ENCODE measurements at regions of chr1 and their contacts with region 1.

Region 1: GRCh38 chr1:153990468-153991150 is at the start of gene RPS27:
- DNase-seq: peak; percentile 99
- ATAC-seq: peak; percentile 36
- H3K4me3 ChIP-seq: peak within 1 kb of the TSS; percentile 94
- H3K27ac ChIP-seq: peak within 1 kb of the TSS; percentile 69
- H3K4me1 ChIP-seq: peaks cover 19% of the 10 kb centered on the region
- H3K27me3 ChIP-seq: no peaks in the 10 kb centered on the region
- CTCF ChIP-seq: no peak
- total RNA-seq, gene RPS27: 1,964 and 2,544 TPM in 2 replicates

Region 2: GRCh38 chr1:153677718-153678505 is 312.7 kb before region 1 on chr1:
- CTCF ChIA-PET with region 1: no interaction called
- POLR2A ChIA-PET with region 1: no interaction called
- intact Hi-C with region 1: loop called (anchors 2 kb)
- DNase-seq: peak; percentile 70
- ATAC-seq: peak; percentile 73
- H3K4me3 ChIP-seq: peak overlapping the region; percentile 67
- H3K27ac ChIP-seq: no peak overlapping the region
- H3K4me1 ChIP-seq: peaks cover 12% of the 10 kb centered on the region
- H3K27me3 ChIP-seq: peaks cover 16% of the 10 kb centered on the region
- CTCF ChIP-seq: peak; percentile 99

Region 3: DNA sequence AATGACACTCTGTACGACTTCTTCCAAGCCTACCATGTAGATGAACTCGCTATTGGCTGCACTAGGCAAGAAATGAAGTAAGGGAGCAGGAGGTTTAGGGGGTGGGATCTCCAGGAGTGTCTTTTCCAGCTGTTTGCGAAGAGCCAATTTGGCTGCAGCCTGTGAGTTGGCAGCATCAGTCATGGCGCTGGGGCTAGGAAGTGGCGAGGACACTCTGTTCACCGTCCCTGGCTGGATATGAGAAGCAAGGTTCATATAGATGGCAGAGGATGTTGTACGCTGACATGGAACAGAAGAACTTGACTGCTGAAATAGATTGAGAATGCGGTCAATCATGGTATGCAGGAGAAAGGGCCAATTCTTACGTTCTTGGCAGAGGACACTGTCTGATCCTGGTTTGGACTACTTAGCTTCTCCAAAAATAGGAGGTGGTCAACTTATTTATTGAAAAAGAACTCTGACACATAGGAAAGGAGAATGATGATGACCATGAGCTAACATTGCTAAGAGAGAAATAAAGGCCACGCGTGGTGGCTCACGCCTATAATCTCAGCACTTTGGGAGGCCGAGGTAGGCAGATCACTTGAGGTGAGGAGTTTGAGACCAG is 174.2 kb before region 1 on chr1:
- CTCF ChIA-PET with region 1: no interaction called
- POLR2A ChIA-PET with region 1: no interaction called
- intact Hi-C with region 1: loop called (anchors 1 kb)
- DNase-seq: no peak
- ATAC-seq: no peak
- H3K4me3 ChIP-seq: no peak overlapping the region
- H3K27ac ChIP-seq: no peak overlapping the region
- H3K4me1 ChIP-seq: no peaks in the 10 kb centered on the region
- H3K27me3 ChIP-seq: no peaks in the 10 kb centered on the region
- CTCF ChIP-seq: no peak

Region 4: GRCh38 chr1:153903841-153904455 is 86.7 kb before region 1 on chr1:
- CTCF ChIA-PET with region 1: no interaction called
- POLR2A ChIA-PET with region 1: no interaction called
- intact Hi-C with region 1: no loop called
- DNase-seq: no peak
- ATAC-seq: no peak
- H3K4me3 ChIP-seq: no peak overlapping the region
- H3K27ac ChIP-seq: no peak overlapping the region
- H3K4me1 ChIP-seq: no peaks in the 10 kb centered on the region
- H3K27me3 ChIP-seq: no peaks in the 10 kb centered on the region
- CTCF ChIP-seq: no peak

Region 5: GRCh38 chr1:153922972-153923925 is 67.4 kb before region 1 on chr1 and contains the start of gene GATAD2B:
- CTCF ChIA-PET with region 1: interaction called, 3 read pairs
- POLR2A ChIA-PET with region 1: interaction called, 3 read pairs
- intact Hi-C with region 1: loop called (anchors 2 kb)
- DNase-seq: peak; percentile 100
- ATAC-seq: peak; percentile 92
- H3K4me3 ChIP-seq: peak within 1 kb of the TSS; percentile 97
- H3K27ac ChIP-seq: peak within 1 kb of the TSS; percentile 58
- H3K4me1 ChIP-seq: peaks cover 30% of the 10 kb centered on the region
- H3K27me3 ChIP-seq: no peaks in the 10 kb centered on the region
- CTCF ChIP-seq: no peak
- total RNA-seq, gene GATAD2B: 7.2 and 11.7 TPM in 2 replicates

Region 6: DNA sequence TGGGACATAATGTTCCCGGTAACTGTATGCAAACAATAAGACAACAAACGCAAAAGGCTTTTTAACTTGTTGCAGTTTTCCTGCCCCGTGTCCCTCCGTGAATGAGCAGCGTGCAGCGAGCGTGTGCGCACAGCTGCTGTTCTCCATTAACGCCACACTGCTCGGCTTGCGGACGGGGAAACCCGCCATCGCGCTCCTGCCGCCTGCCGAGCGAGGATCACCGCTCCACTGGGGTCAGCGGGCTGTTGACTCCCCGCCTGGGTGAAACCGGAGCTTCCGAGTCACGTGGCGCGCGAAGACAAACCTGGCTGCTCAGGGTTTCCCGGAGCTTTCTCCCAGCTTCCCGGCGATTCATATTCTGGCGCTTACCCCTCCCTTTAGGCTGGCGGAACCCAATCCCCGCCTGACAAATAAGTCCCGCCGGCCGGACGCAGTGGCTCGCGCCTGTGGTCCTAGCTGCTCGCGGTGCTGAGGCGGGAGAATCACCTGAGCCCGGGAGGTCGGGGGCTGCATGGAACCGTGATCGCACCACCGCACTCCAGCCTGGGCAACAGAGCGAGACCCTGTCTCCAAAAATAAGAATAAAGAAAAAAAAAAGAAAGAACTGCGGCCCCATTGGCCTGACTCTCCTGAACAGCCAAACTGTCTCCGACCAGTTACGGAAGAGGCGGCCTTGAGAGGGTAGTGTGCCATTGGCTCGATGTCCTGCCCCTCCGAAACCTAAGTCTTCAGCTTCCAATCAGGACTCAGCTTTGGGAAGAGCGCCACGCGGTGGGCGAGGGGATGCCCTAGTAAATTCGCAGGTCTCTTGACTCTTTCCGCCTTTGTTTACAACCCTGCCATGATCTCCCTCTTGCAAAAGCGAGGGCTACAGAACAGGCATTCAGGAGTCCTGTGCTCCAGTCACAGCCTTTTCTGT is 23.3 kb before region 1 on chr1 and contains the start of gene CREB3L4:
- CTCF ChIA-PET with region 1: interaction called, 7 read pairs
- POLR2A ChIA-PET with region 1: interaction called, 3 read pairs
- intact Hi-C with region 1: loop called (anchors 1 kb)
- DNase-seq: peak; percentile 98
- ATAC-seq: peak; percentile 68
- H3K4me3 ChIP-seq: peak within 1 kb of the TSS; percentile 71
- H3K27ac ChIP-seq: peak within 1 kb of the TSS; percentile 81
- H3K4me1 ChIP-seq: peaks cover 31% of the 10 kb centered on the region
- H3K27me3 ChIP-seq: no peaks in the 10 kb centered on the region
- CTCF ChIP-seq: peak; percentile 55
- total RNA-seq, gene CREB3L4: 22.9 and 28.7 TPM in 2 replicates

Measured in PC-3 (cell line).